ENCODE measurements at regions of chr11 and their contacts with region 1.

Region 1: GRCh38 chr11:2298795-2299761 is 2.6 kb downstream of the C11orf21 start:
- DNase-seq: peak in 1 of 5 donors; percentile 15
- H3K4me3 ChIP-seq: no peak overlapping the region
- H3K27ac ChIP-seq: no peak overlapping the region
- H3K4me1 ChIP-seq: peaks cover 2% of the 10 kb centered on the region
- H3K27me3 ChIP-seq: no peaks in the 10 kb centered on the region
- CTCF ChIP-seq: no peak
- EP300 ChIP-seq: no peak
- POLR2A ChIP-seq: no peak

Region 2: GRCh38 chr11:765025-765801 is 1533.9 kb before region 1 on chr11:
- intact Hi-C with region 1: no loop called
- DNase-seq: peak in 3 of 5 donors; percentile 49 to 64 (median 51)
- H3K4me3 ChIP-seq: no peak overlapping the region
- H3K27ac ChIP-seq: no peak overlapping the region
- H3K4me1 ChIP-seq: no peaks in the 10 kb centered on the region
- H3K27me3 ChIP-seq: no peaks in the 10 kb centered on the region
- CTCF ChIP-seq: peak in 2 of 3 donors; percentile 24 to 38
- EP300 ChIP-seq: no peak
- POLR2A ChIP-seq: no peak

Region 3: DNA sequence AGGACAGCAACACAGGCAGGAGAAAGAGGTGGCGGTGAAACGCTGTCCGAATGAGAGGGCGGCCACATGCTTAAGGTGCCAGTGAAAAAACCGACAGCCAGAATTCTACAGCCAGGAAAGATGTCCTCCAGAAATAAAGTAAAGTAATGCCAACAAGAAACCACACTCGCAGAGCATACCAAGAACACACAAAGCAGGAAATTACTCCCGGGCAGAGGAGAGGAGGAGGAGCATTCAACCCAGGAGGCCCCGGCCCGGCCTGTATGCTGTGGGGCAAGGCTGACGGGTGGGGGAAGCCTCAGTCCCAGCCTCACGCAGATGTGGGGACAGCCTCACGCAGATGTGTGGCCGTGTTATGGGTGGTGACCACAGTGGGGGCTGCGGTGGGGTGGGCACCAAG is 1416.5 kb before region 1 on chr11:
- intact Hi-C with region 1: loop called in 1 of 4 experiments (anchors 5 kb)
- DNase-seq: no peak
- H3K4me3 ChIP-seq: no peak overlapping the region
- H3K27ac ChIP-seq: no peak overlapping the region
- H3K4me1 ChIP-seq: no peaks in the 10 kb centered on the region
- H3K27me3 ChIP-seq: no peaks in the 10 kb centered on the region
- CTCF ChIP-seq: no peak
- EP300 ChIP-seq: no peak
- POLR2A ChIP-seq: no peak

Measured in ovary (tissue), 10 donors.